ENCODE measurements at regions of chr11 and their contacts with region 1.

Region 1: DNA sequence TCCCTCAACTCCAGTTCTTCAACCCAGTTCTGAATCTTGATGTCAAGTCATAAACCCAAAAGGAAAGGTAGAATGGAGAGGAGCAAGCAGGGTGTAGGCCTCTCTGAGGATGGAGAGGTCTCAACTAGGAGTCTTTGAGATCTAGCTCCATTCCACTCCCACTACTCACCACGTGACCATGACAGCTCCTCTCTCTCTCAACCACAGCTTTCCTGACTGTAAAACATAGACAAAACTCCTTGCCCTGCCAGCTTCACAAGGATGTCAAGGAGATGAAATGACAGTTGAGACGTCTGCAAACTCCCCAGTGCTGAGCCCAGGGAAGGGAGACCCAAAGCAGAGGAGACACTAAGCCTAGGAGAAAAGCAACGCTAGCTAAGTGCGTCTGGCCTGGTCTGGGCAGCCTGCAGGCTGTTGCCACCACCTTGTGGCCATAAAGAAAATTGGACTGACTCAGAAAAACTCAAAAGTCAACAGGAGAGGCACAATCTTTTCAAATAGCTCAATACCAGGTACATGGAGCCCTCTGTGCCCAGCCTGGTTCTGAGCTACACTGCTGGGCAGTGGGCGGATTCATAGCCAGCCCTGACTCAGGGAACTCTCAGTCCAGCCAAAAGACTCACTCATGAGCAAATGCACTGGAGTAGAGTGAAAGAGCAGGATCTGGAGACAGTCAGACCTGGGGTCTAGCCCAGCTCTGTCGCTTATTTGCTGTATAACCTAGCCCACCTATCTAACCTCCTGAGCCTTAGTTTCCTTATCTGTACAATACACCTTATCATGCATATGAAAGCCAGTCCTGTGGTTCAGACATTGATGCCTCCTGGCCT is 3.4 kb downstream of the CLPB start:
- DNase-seq: peak; percentile 58
- H3K4me3 Mint-ChIP-seq: no peak overlapping the region
- H3K27ac Mint-ChIP-seq: peak overlapping the region; percentile 71
- H3K4me1 Mint-ChIP-seq: peaks cover 51% of the 10 kb centered on the region
- H3K27me3 Mint-ChIP-seq: no peaks in the 10 kb centered on the region

Region 2: DNA sequence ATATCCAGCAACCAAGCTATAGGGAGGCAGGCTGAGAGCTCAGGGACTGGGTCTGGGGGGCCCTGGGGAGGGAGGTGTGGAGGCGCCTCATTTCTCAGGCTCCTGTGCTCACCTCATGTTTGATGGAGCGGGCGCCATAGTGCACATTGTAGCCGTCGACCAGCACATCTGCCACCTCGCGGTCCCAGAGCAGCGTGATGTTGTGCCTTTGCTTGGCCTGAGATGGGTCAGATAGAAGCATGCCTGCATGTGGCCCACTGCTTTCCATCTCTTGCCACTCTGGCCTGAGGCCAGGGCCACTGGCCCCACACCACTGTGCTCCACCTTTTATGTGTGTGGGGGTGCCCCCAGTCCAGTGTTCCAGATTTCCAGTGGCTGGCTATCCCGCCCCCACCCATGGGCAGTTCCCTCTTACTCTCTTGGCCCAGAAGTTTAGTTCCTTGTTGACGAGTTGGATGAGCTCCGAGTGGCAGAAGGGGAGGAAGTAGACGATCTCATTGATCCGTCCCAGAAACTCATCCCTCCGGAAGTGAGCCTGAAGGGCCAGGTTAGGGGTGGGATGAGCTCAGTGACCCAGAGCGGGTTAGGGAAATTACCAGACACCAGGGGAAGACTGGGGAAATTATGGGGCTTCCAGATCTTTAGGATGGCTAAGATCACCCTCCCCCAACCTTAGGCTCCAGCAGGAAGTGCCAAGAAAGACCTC is 136.9 kb before region 1 on chr11:
- CTCF ChIA-PET with region 1: interaction called, 17 read pairs
- POLR2A ChIA-PET with region 1: no interaction called
- DNase-seq: no peak
- H3K4me3 Mint-ChIP-seq: no peak overlapping the region
- H3K27ac Mint-ChIP-seq: no peak overlapping the region
- H3K4me1 Mint-ChIP-seq: peaks cover 2% of the 10 kb centered on the region
- H3K27me3 Mint-ChIP-seq: no peaks in the 10 kb centered on the region

Region 3: DNA sequence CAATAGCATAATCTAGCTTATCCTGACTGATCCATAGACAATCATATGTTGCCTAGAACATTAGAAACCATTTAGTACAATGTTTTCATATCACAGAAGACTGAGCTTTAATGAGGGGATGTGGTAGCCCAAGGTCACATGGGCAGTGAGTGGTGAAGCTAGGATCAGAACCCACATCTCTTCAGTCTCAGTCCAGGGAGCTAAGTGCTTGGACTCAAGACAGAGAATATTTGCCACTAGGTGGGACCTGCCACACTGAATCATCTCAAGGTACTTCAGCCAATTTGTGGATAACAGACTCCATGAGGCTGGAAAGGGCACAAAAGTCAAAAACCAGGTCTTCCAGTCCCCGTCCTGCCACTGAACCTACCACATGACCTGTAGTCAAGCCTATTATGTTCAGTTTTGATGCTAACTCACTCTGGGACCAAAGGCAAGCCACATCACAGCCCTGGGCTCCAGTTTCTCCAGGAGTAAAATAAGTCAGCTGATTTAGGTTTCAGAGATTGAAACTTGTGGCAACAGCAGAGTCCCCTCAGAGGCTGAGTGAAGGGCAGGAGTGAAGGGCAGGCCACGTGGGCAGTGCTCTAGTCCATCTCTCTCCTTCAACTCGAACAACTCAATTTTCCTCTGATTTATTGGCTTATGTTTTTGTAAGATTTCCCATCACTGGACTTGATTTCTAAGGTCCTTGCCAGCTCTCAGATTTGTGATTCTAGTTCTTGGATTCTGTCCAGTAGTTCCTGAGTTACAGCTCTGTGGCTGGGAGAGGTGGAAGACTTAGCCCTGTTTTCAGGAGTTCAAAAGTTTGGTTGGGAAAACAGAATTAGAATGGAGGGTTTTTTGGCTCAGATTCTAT is 102.4 kb before region 1 on chr11:
- CTCF ChIA-PET with region 1: interaction called, 17 read pairs
- POLR2A ChIA-PET with region 1: no interaction called
- DNase-seq: no peak
- H3K4me3 Mint-ChIP-seq: no peak overlapping the region
- H3K27ac Mint-ChIP-seq: no peak overlapping the region
- H3K4me1 Mint-ChIP-seq: peaks cover 52% of the 10 kb centered on the region
- H3K27me3 Mint-ChIP-seq: no peaks in the 10 kb centered on the region

Region 4: GRCh38 chr11:72413914-72414628 is 16.9 kb before region 1 on chr11:
- CTCF ChIA-PET with region 1: interaction called, 106 read pairs
- POLR2A ChIA-PET with region 1: no interaction called
- DNase-seq: peak; percentile 81
- H3K4me3 Mint-ChIP-seq: no peak overlapping the region
- H3K27ac Mint-ChIP-seq: no peak overlapping the region
- H3K4me1 Mint-ChIP-seq: peaks cover 36% of the 10 kb centered on the region
- H3K27me3 Mint-ChIP-seq: no peaks in the 10 kb centered on the region

Region 5: GRCh38 chr11:72446902-72447769 is 16.2 kb after region 1 on chr11:
- CTCF ChIA-PET with region 1: interaction called, 16 read pairs
- POLR2A ChIA-PET with region 1: no interaction called
- DNase-seq: peak; percentile 31
- H3K4me3 Mint-ChIP-seq: no peak overlapping the region
- H3K27ac Mint-ChIP-seq: no peak overlapping the region
- H3K4me1 Mint-ChIP-seq: no peaks in the 10 kb centered on the region
- H3K27me3 Mint-ChIP-seq: peaks cover 26% of the 10 kb centered on the region

Measured in activated CD4-positive, alpha-beta T cell treated with anti-CD3 and anti-CD28 coated beads, Interleukin-2, amount 10 ng/mL, durations not matched to agents 7 days and 5 days (primary cell).